GM13977 (cell line): ENCODE measurements at regions of chr7 and their contacts with region 1.

Region 1: DNA sequence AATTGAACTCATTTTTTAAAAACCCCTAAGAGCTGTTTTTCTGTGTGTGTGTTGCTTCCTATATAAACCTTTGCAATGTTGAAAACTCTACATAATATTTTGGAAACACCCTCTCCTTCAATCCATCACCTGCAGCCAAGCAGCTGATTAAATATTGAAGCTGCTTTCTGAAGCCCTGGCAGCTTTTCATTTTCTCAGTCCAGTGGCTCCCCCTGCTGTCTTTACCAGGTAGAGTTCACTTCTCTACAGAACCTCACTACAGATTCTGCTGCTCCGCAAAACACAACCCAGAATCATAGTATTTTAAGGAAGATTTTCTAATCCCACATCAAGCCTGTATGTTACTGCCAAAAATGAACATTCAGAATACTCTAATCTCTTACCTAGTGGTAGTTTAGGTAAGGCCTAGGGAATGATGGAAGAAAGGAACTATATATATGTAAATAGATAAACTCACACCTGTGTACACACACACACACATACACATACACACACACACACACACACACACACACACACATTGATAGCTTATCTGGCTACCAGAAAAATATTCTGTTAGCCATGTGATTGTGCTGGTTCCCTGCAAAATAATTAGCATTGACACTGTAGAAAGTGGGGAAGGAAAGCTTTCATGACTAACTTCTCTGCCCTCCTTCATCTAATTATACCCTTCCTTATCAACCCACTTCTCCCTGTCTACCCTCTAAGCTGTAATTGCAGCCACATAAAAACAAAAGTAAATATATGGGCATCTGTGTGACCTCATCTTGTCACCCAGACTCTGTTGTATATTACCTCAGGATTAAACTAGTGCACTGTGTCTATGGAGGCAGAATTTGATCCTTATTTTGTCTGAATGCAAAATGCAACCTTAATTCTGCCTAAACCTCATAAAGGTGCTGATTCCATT is 229.5 kb upstream of the FZD1 start:
- DNase-seq: peak; percentile 54
- CTCF ChIP-seq: peak; percentile 72

Region 2: GRCh38 chr7:90455163-90456030 is 579.3 kb before region 1 on chr7:
- in situ Hi-C with region 1: loop called (anchors 25 kb)
- DNase-seq: peak; percentile 54
- CTCF ChIP-seq: peak; percentile 76

Region 3: GRCh38 chr7:91128683-91129348 is 94.1 kb after region 1 on chr7:
- in situ Hi-C with region 1: no loop called
- DNase-seq: no peak
- CTCF ChIP-seq: no peak